Activated CD4-positive, alpha-beta memory T cell treated with anti-CD3 and anti-CD28 coated beads for 36 hours (primary cell): ENCODE measurements at regions of chr2 and their contacts with region 1.

Region 1: DNA sequence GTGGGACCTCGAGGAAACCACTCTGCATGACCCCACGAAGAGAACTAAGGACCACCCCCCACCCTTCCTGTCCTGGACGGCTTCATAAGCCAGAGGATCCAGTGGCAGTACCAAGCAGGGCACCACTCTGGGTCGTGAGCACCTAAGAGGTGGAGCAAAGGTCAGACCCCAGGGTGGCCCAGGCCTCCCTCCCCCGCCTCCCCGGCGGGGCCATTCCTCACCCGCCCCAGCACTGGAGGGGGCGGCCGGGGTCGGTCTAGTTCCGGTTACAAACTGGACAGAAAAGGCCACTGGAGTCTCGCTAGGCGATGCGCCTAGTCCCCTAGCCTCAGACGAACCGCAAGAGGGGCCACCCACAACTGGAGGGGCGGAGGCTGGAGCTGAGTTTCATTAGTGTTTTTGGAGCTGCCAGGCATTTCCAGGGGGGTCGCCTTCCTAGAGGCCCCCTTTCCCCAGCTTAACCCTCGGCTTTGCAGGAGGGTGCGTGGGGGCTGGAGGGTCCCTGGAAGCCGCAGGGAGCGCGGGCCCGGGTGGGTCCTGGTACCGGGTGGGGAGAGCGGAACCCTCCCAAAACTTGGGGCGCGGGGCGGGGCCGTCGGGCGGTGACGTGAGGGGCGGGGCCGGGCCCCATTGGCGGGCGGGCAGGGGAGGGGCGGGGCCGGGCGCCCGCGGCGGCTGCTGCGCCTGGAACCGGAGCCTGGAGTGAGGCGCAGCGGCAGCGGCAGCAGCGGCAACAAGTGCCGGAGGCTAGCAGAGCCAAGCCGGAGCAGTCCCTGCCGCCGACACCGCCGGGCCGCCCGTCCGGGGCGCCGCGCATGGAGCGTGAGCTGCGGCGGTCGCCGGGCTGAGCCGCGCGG is at the start of gene B3GNT2:
- DNase-seq: peak; percentile 89
- H3K4me3 Mint-ChIP-seq: peak within 1 kb of the TSS; percentile 88
- H3K27ac Mint-ChIP-seq: peak within 1 kb of the TSS; percentile 96
- H3K4me1 Mint-ChIP-seq: peaks cover 28% of the 10 kb centered on the region
- H3K27me3 Mint-ChIP-seq: no peaks in the 10 kb centered on the region
- total RNA-seq, gene B3GNT2: 26.6 to 26.9 TPM

Region 2: DNA sequence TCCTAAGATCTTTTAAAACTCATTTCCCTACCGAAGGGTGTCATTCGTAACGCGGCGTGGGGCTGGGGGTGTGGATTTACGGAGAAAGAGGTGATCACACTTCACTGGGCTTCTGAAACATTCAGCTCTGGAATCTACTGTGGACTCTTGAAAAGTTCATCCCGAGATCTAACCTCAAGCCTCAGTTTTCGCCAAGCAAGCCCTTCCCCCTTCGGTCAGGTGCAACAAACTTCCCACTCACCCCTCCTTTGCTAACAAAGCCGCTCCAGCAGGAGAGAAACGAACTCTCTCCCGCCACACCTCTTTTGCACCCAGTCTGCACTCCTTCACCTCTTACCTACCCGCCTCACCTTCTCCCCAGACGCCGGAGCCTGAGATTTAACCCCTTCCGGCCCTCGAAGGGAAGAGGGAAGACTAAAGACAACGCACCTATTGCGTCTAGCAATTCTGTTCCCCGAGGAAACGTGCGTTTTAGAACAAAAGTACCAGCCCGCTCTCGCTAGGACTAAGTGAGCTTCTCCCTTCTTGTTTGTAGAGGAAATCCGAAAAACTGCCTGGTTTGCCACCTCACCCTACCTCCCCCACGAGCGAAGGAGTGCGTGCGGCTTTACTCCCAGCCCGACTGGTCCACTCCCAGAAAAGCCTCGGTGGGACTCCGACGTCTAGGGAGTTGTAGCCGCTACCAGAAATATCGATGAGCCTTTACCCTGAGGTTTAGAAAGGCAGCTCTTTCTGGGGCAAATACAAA is 1178.7 kb before region 1 on chr2:
- CTCF ChIA-PET with region 1: no interaction called
- POLR2A ChIA-PET with region 1: no interaction called
- intact Hi-C with region 1: loop called (anchors 10 kb)
- DNase-seq: peak; percentile 83
- H3K4me3 Mint-ChIP-seq: peak overlapping the region; percentile 94
- H3K27ac Mint-ChIP-seq: peak overlapping the region; percentile 96
- H3K4me1 Mint-ChIP-seq: peaks cover 35% of the 10 kb centered on the region
- H3K27me3 Mint-ChIP-seq: no peaks in the 10 kb centered on the region

Region 3: DNA sequence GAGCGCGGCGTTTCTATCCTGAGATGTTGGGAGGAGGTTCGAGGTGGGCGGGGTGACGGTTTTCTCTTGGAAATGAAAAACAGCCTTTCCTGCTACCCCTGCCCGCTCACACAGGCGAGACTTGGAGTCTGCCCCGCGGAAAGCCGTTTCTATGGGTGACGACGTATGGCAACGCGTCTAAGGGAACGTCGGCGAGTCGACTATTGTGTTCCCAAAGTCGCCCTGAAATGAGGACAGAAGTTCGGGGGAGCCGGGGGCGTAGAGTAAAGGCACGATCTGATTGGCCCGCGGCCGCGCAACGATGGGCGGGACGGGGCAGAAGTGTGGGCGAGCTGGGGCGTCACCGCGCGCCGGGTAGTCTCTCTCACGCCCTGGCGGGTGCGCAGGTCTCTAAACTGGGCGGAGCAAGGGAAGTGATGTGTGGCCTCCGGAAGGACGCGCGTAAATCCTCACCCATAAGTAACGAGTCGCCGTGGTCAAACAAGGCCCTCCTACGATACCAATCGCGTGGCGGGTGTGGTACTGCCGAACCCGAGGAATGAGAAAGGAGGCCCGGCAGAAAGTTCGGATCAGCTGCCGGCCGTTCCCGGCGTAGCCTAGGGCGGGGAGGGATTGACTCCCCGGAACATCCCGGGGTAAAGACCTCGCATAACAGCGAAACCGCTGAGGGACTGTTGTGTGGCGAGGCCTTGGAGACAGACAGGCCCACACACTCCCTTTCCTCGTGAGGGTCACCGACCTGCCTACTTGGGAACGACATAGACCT is 431.4 kb before region 1 on chr2:
- CTCF ChIA-PET with region 1: no interaction called
- POLR2A ChIA-PET with region 1: no interaction called
- intact Hi-C with region 1: loop called (anchors 1 kb)
- DNase-seq: peak; percentile 99
- H3K4me3 Mint-ChIP-seq: peak overlapping the region; percentile 90
- H3K27ac Mint-ChIP-seq: peak overlapping the region; percentile 95
- H3K4me1 Mint-ChIP-seq: peaks cover 17% of the 10 kb centered on the region
- H3K27me3 Mint-ChIP-seq: peaks cover under 1% of the 10 kb centered on the region

Region 4: GRCh38 chr2:61888267-61889055 is 307.2 kb before region 1 on chr2 and contains the start of gene CCT4:
- CTCF ChIA-PET with region 1: no interaction called
- POLR2A ChIA-PET with region 1: no interaction called
- intact Hi-C with region 1: loop called (anchors 1 kb)
- DNase-seq: peak; percentile 92
- H3K4me3 Mint-ChIP-seq: peak within 1 kb of the TSS; percentile 99
- H3K27ac Mint-ChIP-seq: peak within 1 kb of the TSS; percentile 99
- H3K4me1 Mint-ChIP-seq: peaks cover 26% of the 10 kb centered on the region
- H3K27me3 Mint-ChIP-seq: no peaks in the 10 kb centered on the region
- total RNA-seq, gene CCT4: 345 to 352 TPM

Region 5: DNA sequence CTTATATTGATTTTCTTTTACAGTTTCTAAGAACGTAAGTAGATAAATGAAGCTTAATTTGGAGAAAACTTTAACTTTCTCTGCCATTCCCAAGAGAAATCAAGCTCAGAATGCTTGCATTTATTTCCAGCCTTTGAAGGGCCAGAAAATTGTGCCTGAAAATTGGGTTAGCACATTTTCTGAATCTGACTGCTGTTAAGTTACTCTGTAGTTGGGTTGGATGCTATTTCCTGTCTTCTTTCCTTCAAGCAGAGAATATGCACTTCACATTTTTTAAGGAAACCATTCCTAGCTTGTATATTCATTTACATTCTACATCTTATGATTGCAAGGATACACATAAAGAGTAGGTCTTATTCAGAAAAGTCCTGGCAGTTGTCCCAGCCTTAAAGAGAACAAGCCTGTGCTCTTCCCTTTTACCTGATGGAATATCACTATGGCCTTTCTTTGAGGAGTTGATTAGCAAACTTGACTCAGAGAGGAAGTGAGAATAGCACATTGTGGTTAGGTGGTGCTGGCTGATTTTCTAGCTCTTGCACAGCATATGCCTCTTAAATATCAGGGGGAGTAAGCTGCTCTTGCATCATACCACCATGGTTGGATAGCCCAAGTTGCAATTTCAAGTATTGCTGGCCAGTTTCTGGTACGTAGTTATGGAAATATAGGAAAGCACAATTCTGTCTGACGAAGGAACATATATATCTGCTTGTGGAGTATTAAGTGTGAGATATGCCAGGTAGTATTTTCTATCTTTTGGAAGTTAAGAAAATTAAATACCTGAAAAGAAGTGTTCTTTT is 156.5 kb before region 1 on chr2:
- CTCF ChIA-PET with region 1: no interaction called
- POLR2A ChIA-PET with region 1: no interaction called
- intact Hi-C with region 1: loop called (anchors 5 kb)
- DNase-seq: peak; percentile 42
- H3K4me3 Mint-ChIP-seq: no peak overlapping the region
- H3K27ac Mint-ChIP-seq: no peak overlapping the region
- H3K4me1 Mint-ChIP-seq: peaks cover 14% of the 10 kb centered on the region
- H3K27me3 Mint-ChIP-seq: no peaks in the 10 kb centered on the region

Region 6: GRCh38 chr2:62163106-62163831 is 32.4 kb before region 1 on chr2:
- CTCF ChIA-PET with region 1: no interaction called
- POLR2A ChIA-PET with region 1: no interaction called
- intact Hi-C with region 1: no loop called
- DNase-seq: no peak
- H3K4me3 Mint-ChIP-seq: no peak overlapping the region
- H3K27ac Mint-ChIP-seq: no peak overlapping the region
- H3K4me1 Mint-ChIP-seq: peaks cover 2% of the 10 kb centered on the region
- H3K27me3 Mint-ChIP-seq: no peaks in the 10 kb centered on the region

Region 7: GRCh38 chr2:62178741-62179271 is 16.8 kb before region 1 on chr2:
- CTCF ChIA-PET with region 1: no interaction called
- POLR2A ChIA-PET with region 1: no interaction called
- intact Hi-C with region 1: no loop called
- DNase-seq: no peak
- H3K4me3 Mint-ChIP-seq: no peak overlapping the region
- H3K27ac Mint-ChIP-seq: no peak overlapping the region
- H3K4me1 Mint-ChIP-seq: no peaks in the 10 kb centered on the region
- H3K27me3 Mint-ChIP-seq: no peaks in the 10 kb centered on the region

Region 8: GRCh38 chr2:62410015-62410453 is 214.4 kb after region 1 on chr2:
- CTCF ChIA-PET with region 1: interaction called, 4 read pairs
- POLR2A ChIA-PET with region 1: no interaction called
- intact Hi-C with region 1: loop called (anchors 2 kb)
- DNase-seq: no peak
- H3K4me3 Mint-ChIP-seq: no peak overlapping the region
- H3K27ac Mint-ChIP-seq: no peak overlapping the region
- H3K4me1 Mint-ChIP-seq: peaks cover 3% of the 10 kb centered on the region
- H3K27me3 Mint-ChIP-seq: no peaks in the 10 kb centered on the region

Region 9: DNA sequence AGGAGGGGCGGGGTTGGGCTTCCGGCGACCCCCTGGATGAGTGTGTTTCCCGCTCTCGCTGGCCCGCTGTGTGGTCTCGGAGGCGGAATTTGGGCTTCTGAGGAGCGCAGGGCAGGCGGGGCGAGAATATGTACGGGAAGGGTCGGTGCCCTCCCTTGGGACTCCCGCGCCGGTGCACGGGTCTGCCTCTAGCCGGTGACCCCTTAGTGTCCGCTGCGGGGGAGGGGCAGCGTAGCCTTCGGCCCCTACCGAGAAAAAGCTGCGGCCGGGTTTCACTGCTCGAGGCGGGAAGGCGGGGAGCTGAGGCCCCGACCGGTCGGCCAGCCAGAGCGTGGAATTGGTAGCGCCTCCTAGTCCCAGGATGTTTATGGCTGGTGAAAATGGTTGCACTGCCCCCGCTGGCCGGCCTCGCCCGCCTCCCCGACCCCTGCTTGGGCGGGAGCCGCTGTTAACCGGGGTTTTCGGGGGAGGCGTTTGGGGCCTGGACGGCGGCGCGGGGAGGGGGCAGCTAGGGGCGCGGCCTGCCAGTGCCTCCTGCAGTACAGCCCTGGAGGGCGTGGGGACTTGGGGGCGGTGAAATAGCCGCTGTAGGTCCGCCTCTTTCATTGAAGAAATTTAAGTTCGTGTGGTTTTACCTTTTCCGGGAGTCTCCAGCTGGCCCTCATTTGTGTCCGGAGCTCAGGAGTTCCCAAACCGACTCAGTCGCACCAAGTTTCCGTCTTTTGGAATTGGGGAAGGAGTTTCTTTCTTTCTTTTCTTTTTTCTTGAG is 1645.8 kb after region 1 on chr2 and contains the start of gene UGP2:
- CTCF ChIA-PET with region 1: interaction called, 3 read pairs
- POLR2A ChIA-PET with region 1: no interaction called
- intact Hi-C with region 1: loop called (anchors 5 kb)
- DNase-seq: peak; percentile 91
- H3K4me3 Mint-ChIP-seq: peak within 1 kb of the TSS; percentile 99
- H3K27ac Mint-ChIP-seq: peak within 1 kb of the TSS; percentile 100
- H3K4me1 Mint-ChIP-seq: peaks cover 44% of the 10 kb centered on the region
- H3K27me3 Mint-ChIP-seq: no peaks in the 10 kb centered on the region
- total RNA-seq, gene UGP2: 113 to 119 TPM